ENCODE measurements at regions of chr7 and their contacts with region 1.

Region 1: GRCh38 chr7:144871971-144872370 is 36.1 kb upstream of the TPK1 start:
- DNase-seq: no peak
- ATAC-seq: no peak
- H3K4me3 Mint-ChIP-seq: no peak overlapping the region
- H3K27ac Mint-ChIP-seq: no peak overlapping the region
- H3K4me1 Mint-ChIP-seq: no peaks in the 10 kb centered on the region
- H3K27me3 Mint-ChIP-seq: peaks cover 1% of the 10 kb centered on the region

Region 2: DNA sequence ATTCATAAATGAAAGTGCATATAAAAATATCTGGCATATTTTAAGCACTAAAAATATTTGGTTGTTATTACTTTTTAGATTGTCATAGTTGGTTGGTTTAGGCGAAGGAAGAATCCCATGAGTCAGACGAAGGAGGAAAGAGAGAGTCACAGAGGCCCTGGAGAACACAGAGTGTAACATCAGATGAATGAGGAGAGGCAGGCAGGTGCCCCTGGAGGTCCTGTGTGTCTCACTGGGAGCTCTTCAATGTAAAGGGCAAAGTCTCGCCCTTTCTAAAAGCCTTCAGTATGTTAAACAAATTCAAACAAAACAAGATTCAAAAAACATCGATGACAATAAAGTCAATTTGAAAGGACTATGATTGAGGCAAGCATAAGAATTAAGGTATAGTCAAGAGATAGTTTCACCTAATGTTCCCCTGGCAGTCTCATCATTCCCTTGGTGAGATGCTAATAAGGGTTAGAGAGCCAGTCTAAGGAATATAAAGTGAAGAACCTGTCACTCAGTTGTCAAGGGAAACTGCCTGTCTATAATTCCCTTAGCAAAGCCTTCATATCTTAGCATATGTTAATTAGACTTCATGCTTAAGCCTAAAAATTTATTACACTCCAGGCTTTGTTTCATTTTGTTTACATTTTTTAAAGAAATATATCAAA is 230.5 kb before region 1 on chr7:
- CTCF ChIA-PET with region 1: no interaction called
- POLR2A ChIA-PET with region 1: no interaction called
- intact Hi-C with region 1: no loop called
- DNase-seq: no peak
- ATAC-seq: no peak
- H3K4me3 Mint-ChIP-seq: no peak overlapping the region
- H3K27ac Mint-ChIP-seq: no peak overlapping the region
- H3K4me1 Mint-ChIP-seq: no peaks in the 10 kb centered on the region
- H3K27me3 Mint-ChIP-seq: no peaks in the 10 kb centered on the region

Region 3: DNA sequence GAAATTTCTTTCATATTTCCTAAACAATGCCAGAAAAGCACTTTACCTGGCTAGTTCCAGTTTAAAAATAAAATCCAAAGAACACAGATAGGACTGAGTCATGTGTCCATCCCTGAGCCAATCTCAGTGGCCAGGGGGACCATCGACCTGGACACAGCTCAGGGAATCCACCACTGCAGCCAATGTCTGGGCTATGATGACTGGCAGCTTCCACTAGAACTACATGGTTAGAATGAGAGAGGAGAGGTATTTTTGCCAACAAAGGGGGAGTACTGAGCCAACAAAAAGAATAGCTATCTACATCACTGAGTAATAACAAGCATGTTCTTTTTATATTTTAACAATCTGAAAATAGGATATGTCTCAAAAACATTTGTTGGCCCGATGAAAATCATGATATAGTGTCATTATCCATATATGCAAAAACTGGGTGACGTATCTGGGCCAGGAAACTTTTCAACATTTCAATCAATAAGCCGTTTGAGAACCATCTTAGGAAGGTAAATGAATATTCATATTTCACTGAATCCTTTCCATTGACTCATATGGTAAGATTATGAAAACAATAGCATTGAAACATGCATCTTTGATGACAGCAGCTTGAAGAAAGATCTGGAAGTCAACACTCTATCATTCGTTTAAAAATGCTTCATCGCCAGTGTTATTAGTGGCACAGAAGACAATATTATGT is 140.2 kb before region 1 on chr7:
- CTCF ChIA-PET with region 1: no interaction called
- POLR2A ChIA-PET with region 1: no interaction called
- intact Hi-C with region 1: loop called in 1 of 2 experiments (anchors 1 kb)
- DNase-seq: no peak
- ATAC-seq: no peak
- H3K4me3 Mint-ChIP-seq: no peak overlapping the region
- H3K27ac Mint-ChIP-seq: no peak overlapping the region
- H3K4me1 Mint-ChIP-seq: no peaks in the 10 kb centered on the region
- H3K27me3 Mint-ChIP-seq: no peaks in the 10 kb centered on the region

Region 4: DNA sequence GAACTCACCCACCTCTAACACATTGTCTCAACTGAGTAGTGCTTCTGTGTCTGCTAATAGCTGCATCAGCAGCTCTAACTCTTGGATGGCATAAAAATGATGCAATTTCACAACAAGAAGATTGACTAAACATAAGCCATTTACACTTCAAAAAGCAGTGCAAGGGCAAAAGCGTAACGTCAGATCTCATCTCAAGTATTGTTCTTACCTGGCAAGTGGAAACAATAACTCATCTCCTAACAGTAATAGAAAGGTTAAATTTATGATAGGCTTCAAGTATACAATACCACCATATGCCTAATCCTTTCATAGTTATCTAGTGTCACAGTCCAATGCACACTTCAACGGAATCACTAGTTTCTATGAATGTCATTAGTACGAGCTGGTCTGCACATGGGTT is 50.9 kb before region 1 on chr7:
- CTCF ChIA-PET with region 1: no interaction called
- POLR2A ChIA-PET with region 1: no interaction called
- intact Hi-C with region 1: no loop called
- DNase-seq: peak; percentile 40
- ATAC-seq: peak; percentile 83
- H3K4me3 Mint-ChIP-seq: peak overlapping the region; percentile 26
- H3K27ac Mint-ChIP-seq: peak overlapping the region; percentile 98
- H3K4me1 Mint-ChIP-seq: peaks cover 87% of the 10 kb centered on the region
- H3K27me3 Mint-ChIP-seq: no peaks in the 10 kb centered on the region

Region 5: GRCh38 chr7:145050415-145050814 is 178.4 kb after region 1 on chr7:
- CTCF ChIA-PET with region 1: no interaction called
- POLR2A ChIA-PET with region 1: no interaction called
- intact Hi-C with region 1: no loop called
- DNase-seq: no peak
- ATAC-seq: no peak
- H3K4me3 Mint-ChIP-seq: no peak overlapping the region
- H3K27ac Mint-ChIP-seq: no peak overlapping the region
- H3K4me1 Mint-ChIP-seq: no peaks in the 10 kb centered on the region
- H3K27me3 Mint-ChIP-seq: peaks cover 2% of the 10 kb centered on the region